ENCODE measurements at regions of chr9 and their contacts with region 1.

Region 1: GRCh38 chr9:124771021-124771866 is at the start of gene NR6A1:
- DNase-seq: peak; percentile 95
- H3K4me3 Mint-ChIP-seq: peak within 1 kb of the TSS; percentile 83
- H3K27ac Mint-ChIP-seq: peak within 1 kb of the TSS; percentile 74
- H3K4me1 Mint-ChIP-seq: peaks cover 30% of the 10 kb centered on the region
- H3K27me3 Mint-ChIP-seq: peaks cover 62% of the 10 kb centered on the region
- total RNA-seq, gene NR6A1: 1.8 TPM

Region 2: GRCh38 chr9:124708633-124709291 is 62.5 kb before region 1 on chr9:
- CTCF ChIA-PET with region 1: interaction called, 4 read pairs
- intact Hi-C with region 1: loop called (anchors 2 kb)
- DNase-seq: no peak
- H3K4me3 Mint-ChIP-seq: no peak overlapping the region
- H3K27ac Mint-ChIP-seq: no peak overlapping the region
- H3K4me1 Mint-ChIP-seq: no peaks in the 10 kb centered on the region
- H3K27me3 Mint-ChIP-seq: peaks cover 3% of the 10 kb centered on the region

Region 3: GRCh38 chr9:124743686-124744348 is 27.4 kb before region 1 on chr9:
- CTCF ChIA-PET with region 1: no interaction called
- intact Hi-C with region 1: no loop called
- DNase-seq: no peak
- H3K4me3 Mint-ChIP-seq: no peak overlapping the region
- H3K27ac Mint-ChIP-seq: no peak overlapping the region
- H3K4me1 Mint-ChIP-seq: no peaks in the 10 kb centered on the region
- H3K27me3 Mint-ChIP-seq: peaks cover 7% of the 10 kb centered on the region

Region 4: GRCh38 chr9:124852829-124853531 is 81.7 kb after region 1 on chr9 and contains the start of gene WDR38:
- CTCF ChIA-PET with region 1: interaction called, 315 read pairs
- intact Hi-C with region 1: loop called (anchors 1 kb)
- DNase-seq: peak; percentile 83
- H3K4me3 Mint-ChIP-seq: peak within 1 kb of the TSS; percentile 64
- H3K27ac Mint-ChIP-seq: no peak within 1 kb of the TSS
- H3K4me1 Mint-ChIP-seq: peaks cover 20% of the 10 kb centered on the region
- H3K27me3 Mint-ChIP-seq: peaks cover 3% of the 10 kb centered on the region
- total RNA-seq, gene WDR38: not detected

Region 5: GRCh38 chr9:124869986-124870560 is 98.8 kb after region 1 on chr9:
- CTCF ChIA-PET with region 1: no interaction called
- intact Hi-C with region 1: loop called (anchors 1 kb)
- DNase-seq: peak; percentile 98
- H3K4me3 Mint-ChIP-seq: peak overlapping the region; percentile 92
- H3K27ac Mint-ChIP-seq: peak overlapping the region; percentile 99
- H3K4me1 Mint-ChIP-seq: peaks cover 52% of the 10 kb centered on the region
- H3K27me3 Mint-ChIP-seq: no peaks in the 10 kb centered on the region

Region 6: GRCh38 chr9:124940693-124941453 is 169.6 kb after region 1 on chr9 and contains the start of gene GOLGA1:
- CTCF ChIA-PET with region 1: no interaction called
- intact Hi-C with region 1: loop called (anchors 1 kb)
- DNase-seq: peak; percentile 93
- H3K4me3 Mint-ChIP-seq: peak within 1 kb of the TSS; percentile 98
- H3K27ac Mint-ChIP-seq: peak within 1 kb of the TSS; percentile 98
- H3K4me1 Mint-ChIP-seq: peaks cover 22% of the 10 kb centered on the region
- H3K27me3 Mint-ChIP-seq: no peaks in the 10 kb centered on the region
- total RNA-seq, gene GOLGA1: 14.3 to 15.8 TPM

Region 7: GRCh38 chr9:125189361-125190289 is 418.4 kb after region 1 on chr9 and contains the start of gene PPP6C:
- CTCF ChIA-PET with region 1: no interaction called
- intact Hi-C with region 1: loop called (anchors 5 kb)
- DNase-seq: peak; percentile 99
- H3K4me3 Mint-ChIP-seq: peak within 1 kb of the TSS; percentile 97
- H3K27ac Mint-ChIP-seq: peak within 1 kb of the TSS; percentile 97
- H3K4me1 Mint-ChIP-seq: peaks cover 64% of the 10 kb centered on the region
- H3K27me3 Mint-ChIP-seq: no peaks in the 10 kb centered on the region
- total RNA-seq, gene PPP6C: 43.6 to 46.3 TPM

Region 8: DNA sequence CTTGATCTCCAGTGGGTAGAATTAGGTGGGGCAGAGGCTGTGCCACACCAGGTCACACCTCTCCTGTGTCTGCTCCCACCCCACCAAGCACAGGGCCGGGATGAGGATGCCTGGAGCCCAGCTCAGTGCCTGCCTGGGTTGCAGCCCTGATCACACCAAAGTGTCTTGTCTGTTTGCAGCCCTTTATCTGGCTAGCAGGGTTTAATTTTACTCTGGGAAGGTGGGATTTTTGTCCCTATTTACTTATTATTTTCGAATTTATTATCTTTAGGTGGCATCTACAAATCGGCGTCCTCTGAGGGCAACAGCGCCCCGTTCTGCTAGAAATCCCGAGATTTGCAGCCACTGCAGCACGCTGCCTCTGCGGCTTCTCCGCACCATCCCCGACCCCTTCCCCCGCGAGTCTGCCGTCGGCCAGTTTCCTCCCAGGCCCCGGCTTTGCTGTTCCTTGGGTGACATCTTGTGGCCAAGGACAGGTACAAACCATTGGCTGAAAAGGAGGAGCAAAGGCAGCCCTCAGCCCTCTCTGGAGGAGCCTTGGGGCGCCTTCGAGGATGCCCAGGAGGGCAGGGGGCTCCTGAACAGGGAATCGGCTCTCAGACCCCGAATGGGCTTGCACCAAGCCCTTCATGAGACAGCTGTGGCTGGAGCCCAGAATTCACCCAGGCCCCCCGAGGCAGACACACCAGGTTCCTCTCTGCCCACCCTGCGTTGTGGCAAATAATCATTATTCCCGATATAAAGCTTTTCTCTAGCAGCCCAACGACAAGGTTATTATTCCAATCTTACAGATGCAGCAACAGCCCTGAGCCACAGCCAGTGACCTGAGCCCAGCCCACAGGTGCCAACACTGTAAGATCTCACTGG is 603.4 kb after region 1 on chr9:
- CTCF ChIA-PET with region 1: interaction called, 3 read pairs
- intact Hi-C with region 1: loop called (anchors 1 kb)
- DNase-seq: peak; percentile 80
- H3K4me3 Mint-ChIP-seq: peak overlapping the region; percentile 58
- H3K27ac Mint-ChIP-seq: no peak overlapping the region
- H3K4me1 Mint-ChIP-seq: peaks cover 7% of the 10 kb centered on the region
- H3K27me3 Mint-ChIP-seq: peaks cover 3% of the 10 kb centered on the region